RWPE1 (cell line): ENCODE measurements at regions of chr12 and their contacts with region 1.

Region 1: GRCh38 chr12:132649206-132649934 is 30.8 kb downstream of the P2RX2 start:
- DNase-seq: no peak
- H3K27ac ChIP-seq: no peak overlapping the region
- CTCF ChIP-seq: no peak

Region 2: DNA sequence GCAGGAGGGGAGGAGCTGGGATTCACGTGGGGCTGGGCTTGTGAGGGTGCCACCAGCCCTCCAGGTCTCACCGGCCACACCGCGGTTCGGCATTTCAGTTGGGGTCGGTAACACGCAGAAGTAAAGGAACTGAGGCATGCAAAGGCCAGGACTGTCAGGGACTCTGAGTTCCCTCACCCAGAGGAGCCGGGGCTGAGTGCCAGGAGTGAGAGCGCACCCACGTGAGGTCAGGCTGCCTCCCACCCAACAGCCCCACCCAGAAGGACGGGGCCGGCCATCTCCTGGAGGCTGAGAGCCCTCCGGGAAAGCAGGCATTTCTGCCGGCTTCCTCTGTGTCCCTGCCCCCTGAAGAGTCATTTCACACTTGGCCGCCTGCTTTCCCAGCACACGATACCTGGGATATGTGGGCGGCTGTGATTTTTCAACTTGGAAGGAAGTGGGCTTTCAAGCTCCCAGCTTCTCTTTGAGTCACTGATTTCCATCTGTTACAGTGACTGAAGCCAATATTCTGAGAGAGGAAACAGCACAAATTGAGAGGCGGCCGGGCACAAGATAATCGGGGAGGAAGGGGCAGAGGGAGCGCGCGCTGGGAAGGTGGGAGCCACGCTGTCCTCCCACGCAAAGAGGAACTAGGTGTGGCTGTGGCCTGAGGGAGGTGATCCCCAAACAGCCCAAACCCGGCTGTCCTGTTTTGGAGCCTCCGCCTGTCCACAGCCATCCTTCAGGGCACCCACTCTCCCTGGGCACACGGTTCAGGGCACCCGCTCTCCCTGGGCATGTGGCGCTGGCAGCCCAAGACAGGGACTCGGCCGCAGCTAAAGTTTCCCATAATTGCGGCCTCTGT is 339.0 kb before region 1 on chr12:
- CTCF ChIA-PET with region 1: no interaction called
- POLR2A ChIA-PET with region 1: no interaction called
- DNase-seq: no peak
- H3K27ac ChIP-seq: no peak overlapping the region
- CTCF ChIP-seq: no peak

Region 3: DNA sequence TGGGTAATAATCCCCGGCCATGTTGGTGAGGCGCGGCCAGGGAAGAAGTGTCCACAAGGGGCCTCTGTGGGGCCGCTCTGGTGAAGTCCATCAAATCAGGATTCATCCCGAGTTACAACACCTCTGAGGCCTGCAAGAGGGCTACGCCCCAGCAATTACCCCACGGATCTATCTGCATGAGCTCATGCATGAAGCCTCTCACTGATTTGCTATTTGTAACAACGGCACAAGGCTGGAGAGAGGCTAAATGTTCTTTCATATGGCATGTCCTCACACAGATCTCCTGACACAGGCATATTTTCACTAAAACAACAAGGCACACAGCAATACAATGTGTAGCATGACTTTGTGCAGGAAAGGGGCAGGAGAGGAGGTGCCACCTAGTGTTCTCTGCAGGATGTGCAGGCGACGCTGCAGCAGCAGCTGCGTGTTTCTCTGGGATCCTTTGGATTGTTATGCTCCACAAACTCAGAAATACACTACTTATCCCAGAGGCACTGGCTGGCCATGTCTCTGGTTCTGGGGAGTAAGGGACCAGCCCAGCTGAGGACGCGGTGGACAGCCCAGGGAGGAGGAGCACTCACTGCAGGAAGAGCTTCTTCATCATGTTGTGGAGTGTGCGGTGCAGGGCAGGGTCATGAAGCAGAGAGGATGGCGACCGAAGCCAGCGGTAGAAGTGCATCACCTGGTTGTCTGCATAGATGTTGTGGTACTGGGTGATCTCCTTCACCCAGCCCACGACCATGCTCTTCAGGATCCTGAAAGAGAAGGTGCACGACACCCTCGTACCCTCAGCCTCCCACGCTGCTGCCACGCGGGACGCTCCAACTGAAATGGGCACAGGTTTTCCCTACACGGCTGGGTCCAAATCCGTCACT is 10.6 kb before region 1 on chr12:
- CTCF ChIA-PET with region 1: interaction called, 12 read pairs
- POLR2A ChIA-PET with region 1: no interaction called
- DNase-seq: peak; percentile 49
- H3K27ac ChIP-seq: 0 out of 2 replicates have a peak overlapping the region, but pooled peaks have one; percentile 1
- CTCF ChIP-seq: peak; percentile 83

Region 4: GRCh38 chr12:132899033-132899432 is 249.7 kb after region 1 on chr12:
- CTCF ChIA-PET with region 1: no interaction called
- POLR2A ChIA-PET with region 1: no interaction called
- DNase-seq: no peak
- H3K27ac ChIP-seq: no peak overlapping the region
- CTCF ChIP-seq: no peak